ENCODE measurements at regions of chr5 and their contacts with region 1.

Region 1: DNA sequence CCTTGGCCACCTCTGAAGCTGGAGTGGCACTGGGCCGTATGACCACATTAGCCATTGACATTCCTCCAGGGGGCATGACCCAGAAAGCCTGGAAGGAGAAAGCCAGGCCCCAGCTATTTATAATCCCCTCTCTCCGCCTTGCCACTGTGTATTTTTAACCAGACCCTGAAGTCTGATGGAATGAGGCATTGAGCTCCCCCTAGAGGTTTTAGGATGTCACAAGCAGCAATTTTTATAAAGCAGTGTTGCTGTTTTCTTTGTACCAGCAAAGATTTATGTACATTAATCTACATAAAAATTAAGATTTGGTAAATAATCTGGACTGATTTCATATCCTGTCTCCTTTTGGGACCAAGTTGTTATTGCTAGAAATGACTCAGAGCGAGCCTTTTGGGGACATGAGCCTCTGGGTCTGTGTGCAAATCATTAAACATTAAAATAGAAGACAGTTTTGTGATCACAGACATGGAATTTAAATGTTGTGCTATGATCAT is 127.1 kb downstream of the TRIO start:
- DNase-seq: peak; percentile 38
- ATAC-seq: peak; percentile 76
- H3K4me3 Mint-ChIP-seq: no peak overlapping the region
- H3K27ac Mint-ChIP-seq: peak overlapping the region; percentile 99
- H3K4me1 Mint-ChIP-seq: peaks cover 61% of the 10 kb centered on the region
- H3K27me3 Mint-ChIP-seq: no peaks in the 10 kb centered on the region
- CTCF ChIP-seq: peak; percentile 66; the same call in 1 of the 2 replicates

Region 2: DNA sequence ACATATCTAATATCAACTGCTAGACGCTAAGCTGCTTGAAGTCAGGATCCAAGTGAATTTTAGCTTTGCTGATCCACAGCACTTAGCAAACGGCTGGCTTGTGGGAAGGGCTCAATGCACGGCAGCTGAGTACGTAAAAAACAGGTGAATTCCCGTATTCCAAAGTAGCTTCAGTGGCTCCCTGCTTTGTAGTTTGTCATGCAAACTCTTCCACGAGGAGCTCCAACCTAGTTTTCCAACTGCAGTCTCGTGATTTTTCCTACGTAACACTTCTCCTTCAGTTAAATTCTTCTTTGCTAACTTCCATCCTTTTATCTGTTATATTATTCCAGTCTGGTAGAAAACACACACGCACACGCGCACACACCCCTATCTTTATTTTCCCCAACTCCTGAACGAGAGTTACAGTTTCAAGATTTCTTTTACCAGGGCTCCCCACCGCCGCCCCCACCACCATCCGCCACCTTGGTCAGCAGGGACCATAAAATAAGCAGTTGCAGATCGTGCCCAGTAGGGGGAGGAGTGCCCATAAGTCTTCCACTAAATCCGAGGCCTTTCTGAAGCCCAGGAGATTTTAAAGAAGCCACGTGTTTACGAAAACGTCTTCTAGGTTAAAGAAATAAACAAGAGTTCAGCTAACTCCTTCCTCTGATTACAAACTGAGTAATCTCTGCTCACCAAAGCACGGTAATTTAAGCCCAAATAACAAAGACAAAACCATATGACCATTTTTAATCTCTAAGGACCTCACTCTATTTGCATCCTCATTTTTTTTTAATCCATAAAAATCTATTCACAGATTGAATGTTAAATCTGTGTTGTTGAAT is 161.9 kb before region 1 on chr5:
- CTCF ChIA-PET with region 1: interaction called, 37 read pairs
- POLR2A ChIA-PET with region 1: no interaction called
- DNase-seq: peak; percentile 69
- ATAC-seq: peak; percentile 95
- H3K4me3 Mint-ChIP-seq: peak overlapping the region; percentile 71
- H3K27ac Mint-ChIP-seq: peak overlapping the region; percentile 54; the same call in 1 of the 2 replicates
- H3K4me1 Mint-ChIP-seq: peaks cover 17% of the 10 kb centered on the region
- H3K27me3 Mint-ChIP-seq: peaks cover 16% of the 10 kb centered on the region
- CTCF ChIP-seq: peak; percentile 60

Region 3: GRCh38 chr5:14148890-14149671 is 121.2 kb before region 1 on chr5:
- CTCF ChIA-PET with region 1: interaction called, 45 read pairs
- POLR2A ChIA-PET with region 1: no interaction called
- DNase-seq: no peak
- ATAC-seq: peak; percentile 10
- H3K4me3 Mint-ChIP-seq: no peak overlapping the region; the same call in 1 of the 2 replicates
- H3K27ac Mint-ChIP-seq: peak overlapping the region; percentile 57
- H3K4me1 Mint-ChIP-seq: peaks cover 80% of the 10 kb centered on the region
- H3K27me3 Mint-ChIP-seq: peaks cover 8% of the 10 kb centered on the region; the same call in 1 of the 2 replicates
- CTCF ChIP-seq: no peak

Region 4: DNA sequence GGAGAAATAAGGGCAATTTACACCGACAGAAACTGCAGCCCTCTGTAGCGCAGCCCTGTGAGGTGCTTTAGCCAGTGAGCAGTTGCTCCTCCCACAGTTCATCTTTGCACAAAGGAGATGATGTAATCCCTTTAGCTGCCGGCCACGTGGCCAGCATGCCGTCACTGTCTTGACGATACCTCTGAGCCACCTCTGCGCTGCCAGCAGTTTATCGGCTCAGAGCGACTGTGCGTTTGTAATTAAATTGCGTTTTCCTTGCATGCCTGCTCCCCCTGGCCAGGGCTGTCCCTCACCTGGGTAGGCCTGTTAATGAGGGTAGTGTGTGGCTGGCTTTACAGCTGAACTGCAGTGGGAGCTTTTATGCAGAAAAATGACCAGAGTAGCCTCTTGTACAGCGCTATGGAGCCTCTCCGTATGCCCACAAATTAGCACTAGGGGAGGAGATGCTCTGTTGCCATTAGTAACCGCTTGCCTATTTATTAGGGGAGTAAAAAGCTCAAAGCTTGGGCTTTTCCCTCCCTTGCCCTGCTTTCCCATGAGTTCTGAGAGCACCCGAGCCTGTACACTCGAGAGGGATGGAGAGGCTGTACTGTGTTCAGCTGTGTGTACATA is 20.1 kb before region 1 on chr5:
- CTCF ChIA-PET with region 1: interaction called, 10 read pairs
- POLR2A ChIA-PET with region 1: interaction called, 5 read pairs
- DNase-seq: peak; percentile 54
- ATAC-seq: peak; percentile 76
- H3K4me3 Mint-ChIP-seq: no peak overlapping the region
- H3K27ac Mint-ChIP-seq: no peak overlapping the region
- H3K4me1 Mint-ChIP-seq: peaks cover 63% of the 10 kb centered on the region
- H3K27me3 Mint-ChIP-seq: no peaks in the 10 kb centered on the region
- CTCF ChIP-seq: no peak

Region 5: GRCh38 chr5:14280294-14280854 is 10.1 kb after region 1 on chr5:
- CTCF ChIA-PET with region 1: interaction called, 15 read pairs
- POLR2A ChIA-PET with region 1: no interaction called
- DNase-seq: no peak
- ATAC-seq: no peak
- H3K4me3 Mint-ChIP-seq: no peak overlapping the region
- H3K27ac Mint-ChIP-seq: no peak overlapping the region
- H3K4me1 Mint-ChIP-seq: peaks cover 49% of the 10 kb centered on the region
- H3K27me3 Mint-ChIP-seq: no peaks in the 10 kb centered on the region
- CTCF ChIP-seq: no peak

Region 6: GRCh38 chr5:14351845-14352712 is 81.8 kb after region 1 on chr5:
- CTCF ChIA-PET with region 1: interaction called, 13 read pairs
- POLR2A ChIA-PET with region 1: no interaction called
- DNase-seq: peak; percentile 64
- ATAC-seq: peak; percentile 93
- H3K4me3 Mint-ChIP-seq: no peak overlapping the region
- H3K27ac Mint-ChIP-seq: no peak overlapping the region
- H3K4me1 Mint-ChIP-seq: peaks cover 29% of the 10 kb centered on the region
- H3K27me3 Mint-ChIP-seq: no peaks in the 10 kb centered on the region
- CTCF ChIP-seq: peak; percentile 93

Region 7: DNA sequence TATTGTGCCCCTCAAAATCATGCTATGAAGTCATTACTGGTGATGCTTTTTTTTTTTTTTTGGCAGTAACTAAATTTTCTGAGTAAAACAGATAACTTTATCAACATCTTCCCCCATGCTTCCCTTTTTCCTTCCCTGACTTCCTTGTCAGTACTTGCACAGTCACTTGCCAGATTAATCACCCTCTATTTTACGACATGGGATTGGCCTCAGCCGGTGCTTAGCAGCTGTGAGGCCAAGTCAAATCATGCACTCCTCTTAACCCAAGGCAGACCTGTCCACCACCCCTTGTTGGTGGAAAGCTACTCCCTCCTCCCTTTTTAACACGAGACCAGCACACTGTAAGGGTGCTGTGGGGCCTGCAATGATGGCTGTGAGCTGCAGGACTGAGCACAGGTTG is 193.4 kb after region 1 on chr5:
- CTCF ChIA-PET with region 1: no interaction called
- POLR2A ChIA-PET with region 1: no interaction called
- DNase-seq: no peak
- ATAC-seq: no peak
- H3K4me3 Mint-ChIP-seq: no peak overlapping the region
- H3K27ac Mint-ChIP-seq: peak overlapping the region; percentile 83
- H3K4me1 Mint-ChIP-seq: peaks cover 10% of the 10 kb centered on the region
- H3K27me3 Mint-ChIP-seq: no peaks in the 10 kb centered on the region
- CTCF ChIP-seq: no peak

Measured in WTC11 (cell line).